HepG2 (cell line): ENCODE measurements at regions of chr15 and their contacts with region 1.

Region 1: GRCh38 chr15:75023181-75023871 is at the start of gene PPCDC:
- DNase-seq: peak; percentile 94
- ATAC-seq: peak; percentile 98
- H3K4me3 ChIP-seq: peak within 1 kb of the TSS; percentile 87 to 95 (median 94)
- H3K27ac ChIP-seq: peak within 1 kb of the TSS; percentile 80
- H3K4me1 ChIP-seq: peaks cover 25% of the 10 kb centered on the region
- H3K27me3 ChIP-seq: no peaks in the 10 kb centered on the region
- CTCF ChIP-seq: no peak
- EP300 ChIP-seq: 0 out of 4 replicates have a peak, but pooled peaks of 1 of the 2 experiments have one; percentile 37
- POLR2A ChIP-seq: peak; percentile 95 to 98
- RAD21 ChIP-seq: peak; percentile 45
- total RNA-seq, gene PPCDC: 9.9 and 12.3 TPM in 2 replicates

Region 2: DNA sequence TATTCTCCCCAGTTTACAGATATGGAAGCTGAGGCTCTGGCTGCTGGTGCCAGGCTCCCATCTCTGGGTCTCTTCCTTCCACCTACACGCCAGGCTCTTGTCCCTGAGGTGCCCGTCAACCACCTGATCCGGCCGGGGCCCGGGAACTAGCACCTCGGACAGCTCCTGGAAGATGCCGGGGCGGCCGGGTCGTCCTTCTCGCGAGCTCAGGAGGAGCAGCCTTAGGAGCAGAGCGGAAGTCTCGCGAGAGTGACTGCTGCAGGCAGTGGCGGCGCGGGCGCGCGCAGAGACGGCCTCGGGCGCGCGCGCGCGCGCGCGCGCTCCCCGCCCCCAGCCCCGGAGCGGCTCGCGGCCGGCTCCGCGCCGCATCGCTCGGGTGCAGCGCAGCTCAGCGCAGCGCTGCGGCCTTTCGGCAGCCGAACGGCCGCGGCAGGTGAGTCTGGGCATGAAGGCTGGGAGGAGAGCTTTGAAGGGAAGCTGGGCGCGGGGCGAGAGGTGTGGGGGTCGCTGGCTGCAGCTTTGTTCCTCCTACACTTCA is 28.0 kb before region 1 on chr15 and contains the start of gene SCAMP5:
- CTCF ChIA-PET with region 1: no interaction called
- POLR2A ChIA-PET with region 1: interaction called, 17 read pairs
- in situ Hi-C with region 1: no loop called
- intact Hi-C with region 1: no loop called
- DNase-seq: peak; percentile 90
- ATAC-seq: peak; percentile 76
- H3K4me3 ChIP-seq: peak within 1 kb of the TSS; percentile 79 to 96 (median 95)
- H3K27ac ChIP-seq: peak within 1 kb of the TSS; percentile 71
- H3K4me1 ChIP-seq: peaks cover 21% of the 10 kb centered on the region
- H3K27me3 ChIP-seq: 0 out of 5 replicates have a peak, but pooled peaks cover 0 to 3% of the 10 kb centered on the region in 2 experiments
- CTCF ChIP-seq: no peak
- EP300 ChIP-seq: peak; percentile 18 to 27; a peak in 1 of 4 replicates
- POLR2A ChIP-seq: peak; percentile 40 to 62; a peak in 1 of 4 replicates
- RAD21 ChIP-seq: no peak
- total RNA-seq, gene SCAMP5: 31.1 and 34.3 TPM in 2 replicates

Region 3: GRCh38 chr15:75036314-75036649 is 13.0 kb after region 1 on chr15:
- CTCF ChIA-PET with region 1: no interaction called
- POLR2A ChIA-PET with region 1: interaction called, 11 read pairs
- in situ Hi-C with region 1: no loop called
- intact Hi-C with region 1: no loop called
- DNase-seq: no peak
- ATAC-seq: no peak
- H3K4me3 ChIP-seq: no peak overlapping the region
- H3K27ac ChIP-seq: no peak overlapping the region
- H3K4me1 ChIP-seq: peaks cover 53% of the 10 kb centered on the region
- H3K27me3 ChIP-seq: no peaks in the 10 kb centered on the region
- CTCF ChIP-seq: no peak
- EP300 ChIP-seq: no peak
- POLR2A ChIP-seq: no peak
- RAD21 ChIP-seq: no peak